PC-9 (cell line): ENCODE measurements at regions of chr10 and their contacts with region 1.

Region 1: GRCh38 chr10:78236416-78237015 is 202.9 kb downstream of the RPS24 start:
- DNase-seq: no peak
- H3K4me3 ChIP-seq: no peak overlapping the region
- H3K27ac ChIP-seq: no peak overlapping the region
- H3K4me1 ChIP-seq: no peaks in the 10 kb centered on the region
- H3K27me3 ChIP-seq: no peaks in the 10 kb centered on the region
- CTCF ChIP-seq: no peak

Region 2: GRCh38 chr10:78727728-78728127 is 491.2 kb after region 1 on chr10:
- CTCF ChIA-PET with region 1: no interaction called
- POLR2A ChIA-PET with region 1: no interaction called
- intact Hi-C with region 1: loop called (anchors 5 kb)
- DNase-seq: no peak
- H3K4me3 ChIP-seq: no peak overlapping the region
- H3K27ac ChIP-seq: no peak overlapping the region
- H3K4me1 ChIP-seq: no peaks in the 10 kb centered on the region
- H3K27me3 ChIP-seq: peaks cover 24% of the 10 kb centered on the region
- CTCF ChIP-seq: no peak